ENCODE measurements at regions of chr21 and their contacts with region 1.

Region 1: GRCh38 chr21:32712043-32712442 is 15.8 kb downstream of the SYNJ1 start:
- DNase-seq: peak; percentile 73
- H3K4me3 ChIP-seq: peak overlapping the region; percentile 2
- H3K27ac ChIP-seq: no peak overlapping the region
- H3K4me1 ChIP-seq: peaks cover 23% of the 10 kb centered on the region
- CTCF ChIP-seq: no peak

Region 2: GRCh38 chr21:32727687-32728455 is 15.8 kb after region 1 on chr21 and contains the start of gene SYNJ1:
- CTCF ChIA-PET with region 1: no interaction called
- POLR2A ChIA-PET with region 1: interaction called, 11 read pairs
- intact Hi-C with region 1: no loop called
- DNase-seq: peak; percentile 93
- H3K4me3 ChIP-seq: peak within 1 kb of the TSS; percentile 92
- H3K27ac ChIP-seq: peak within 1 kb of the TSS; percentile 30
- H3K4me1 ChIP-seq: peaks cover 19% of the 10 kb centered on the region
- CTCF ChIP-seq: no peak
- total RNA-seq, gene SYNJ1: 3.0 and 3.8 TPM in 2 replicates

Measured in OCI-LY7 (cell line).